ENCODE measurements at regions of chr1 and their contacts with region 1.

Region 1: DNA sequence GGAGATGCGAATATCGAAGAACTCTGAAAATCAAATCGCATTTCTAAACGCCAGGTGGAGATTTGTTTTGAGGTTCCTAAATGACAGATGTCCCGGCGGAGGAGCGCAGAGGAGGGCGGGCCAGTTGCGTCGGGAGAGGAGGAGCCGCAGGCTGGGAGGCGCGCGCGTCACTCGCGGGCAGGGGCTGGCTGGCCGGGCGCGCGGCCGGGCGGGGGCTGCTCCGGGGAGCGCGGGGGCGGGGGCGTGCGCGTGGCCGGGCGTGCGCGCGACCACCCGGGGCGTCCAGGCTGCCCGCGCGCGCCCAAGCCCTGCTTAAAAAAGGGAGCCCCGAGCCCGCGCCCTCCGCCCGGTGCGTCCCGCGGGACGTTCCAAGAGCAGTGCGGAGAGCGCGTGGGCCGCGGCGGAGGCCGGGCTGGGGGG is 47.3 kb downstream of the H3-3A start:
- DNase-seq: peak; percentile 96
- H3K4me3 ChIP-seq: peak overlapping the region; percentile 76
- H3K27ac ChIP-seq: peak overlapping the region; percentile 95
- H3K4me1 ChIP-seq: peaks cover 32% of the 10 kb centered on the region
- H3K27me3 ChIP-seq: no peaks in the 10 kb centered on the region
- CTCF ChIP-seq: no peak

Region 2: DNA sequence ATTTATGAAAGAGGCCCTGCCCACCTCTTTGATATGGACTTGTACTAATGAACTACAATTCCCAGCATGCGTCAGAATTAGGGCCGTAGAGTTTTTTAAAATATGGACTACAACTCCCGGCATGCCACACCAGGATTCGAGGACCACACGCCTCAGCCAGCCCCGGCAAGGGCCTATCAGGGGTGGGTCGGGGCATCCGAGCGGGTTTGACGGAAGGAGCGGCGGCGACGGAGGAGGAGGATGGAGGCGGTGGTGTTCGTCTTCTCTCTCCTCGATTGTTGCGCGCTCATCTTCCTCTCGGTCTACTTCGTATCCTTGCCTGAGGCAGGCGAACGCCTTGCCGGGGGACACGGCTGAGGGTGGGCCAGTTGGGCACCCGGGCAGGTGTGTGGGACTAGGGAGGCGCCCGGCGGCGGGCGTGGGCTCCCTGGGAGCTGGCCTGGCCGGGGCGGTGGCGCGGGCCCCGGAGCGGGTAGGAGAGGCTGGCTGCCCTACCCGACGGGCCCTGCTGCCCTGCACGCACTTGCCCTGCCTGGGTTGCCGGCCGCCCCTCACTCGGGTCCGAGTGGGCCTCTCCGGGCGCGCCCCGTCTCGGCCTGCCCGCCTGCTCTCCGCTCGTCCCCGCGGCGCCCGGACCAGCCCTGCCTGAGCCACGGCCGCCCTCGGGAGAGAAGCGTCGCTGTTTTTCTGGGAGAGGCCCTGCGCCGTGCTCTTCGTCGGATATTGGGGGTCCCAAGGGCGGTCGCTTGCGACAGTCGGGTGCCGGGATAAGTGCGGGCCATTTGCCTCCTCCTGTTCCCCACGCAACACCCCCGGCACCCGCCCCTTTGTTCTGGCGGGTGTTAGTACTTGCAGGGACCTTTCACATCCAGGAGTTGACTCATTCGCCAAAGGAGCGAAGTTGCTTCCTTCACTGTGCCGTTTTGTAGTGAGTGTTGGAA is 1752.9 kb before region 1 on chr1 and contains the start of gene CNIH4:
- CTCF ChIA-PET with region 1: no interaction called
- POLR2A ChIA-PET with region 1: interaction called, 11 read pairs
- intact Hi-C with region 1: no loop called
- DNase-seq: peak; percentile 99
- H3K4me3 ChIP-seq: peak within 1 kb of the TSS; percentile 90
- H3K27ac ChIP-seq: peak within 1 kb of the TSS; percentile 78
- H3K4me1 ChIP-seq: peaks cover 5% of the 10 kb centered on the region
- H3K27me3 ChIP-seq: no peaks in the 10 kb centered on the region
- CTCF ChIP-seq: no peak
- total RNA-seq, gene CNIH4: 76.7 and 79.9 TPM in 2 replicates

Measured in A673 (cell line).